Thyroid gland (tissue), 4 donors: ENCODE measurements at regions of chr1 and their contacts with region 1.

Region 1: GRCh38 chr1:23216771-23217420 is 406 bp downstream of the HTR1D start:
- DNase-seq: peak; percentile 12 to 17
- H3K4me3 ChIP-seq: peak overlapping the region in 1 of 3 donors; percentile 39
- H3K27ac ChIP-seq: no peak overlapping the region
- H3K4me1 ChIP-seq: peaks cover 5 to 13% of the 10 kb centered on the region in 2 donors
- H3K27me3 ChIP-seq: no peaks in the 10 kb centered on the region
- CTCF ChIP-seq: peak in 4 of 6 experiments; percentile 35 to 69 (median 52)
- POLR2A ChIP-seq: no peak

Region 2: DNA sequence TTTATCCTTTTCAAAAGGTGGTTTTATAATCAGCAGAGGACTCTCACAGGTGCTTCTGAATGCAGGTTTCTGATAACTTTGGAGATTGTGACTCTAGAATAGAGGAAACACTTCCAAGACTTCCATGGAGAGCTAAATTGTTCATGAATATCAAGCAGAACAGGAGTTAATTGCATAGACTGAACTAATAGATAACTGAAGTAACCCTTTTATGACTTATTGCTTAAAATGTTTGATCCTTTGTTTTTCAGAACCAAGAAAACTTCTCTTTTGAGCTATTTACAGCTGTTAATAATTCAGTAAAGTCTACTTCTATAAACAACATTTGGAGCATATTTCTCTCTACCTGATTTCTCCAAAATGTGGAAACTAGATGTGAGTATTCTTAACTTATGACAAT is 221.1 kb before region 1 on chr1:
- intact Hi-C with region 1: no loop called
- DNase-seq: no peak
- H3K4me3 ChIP-seq: no peak overlapping the region
- H3K27ac ChIP-seq: no peak overlapping the region
- H3K4me1 ChIP-seq: no peaks in the 10 kb centered on the region
- H3K27me3 ChIP-seq: no peaks in the 10 kb centered on the region
- CTCF ChIP-seq: no peak
- POLR2A ChIP-seq: no peak

Region 3: GRCh38 chr1:23278717-23279116 is 61.8 kb after region 1 on chr1:
- intact Hi-C with region 1: loop called (anchors 5 kb)
- DNase-seq: no peak
- H3K4me3 ChIP-seq: no peak overlapping the region
- H3K27ac ChIP-seq: no peak overlapping the region
- H3K4me1 ChIP-seq: peaks cover 0 to under 1% of the 10 kb centered on the region in 2 donors
- H3K27me3 ChIP-seq: no peaks in the 10 kb centered on the region
- CTCF ChIP-seq: no peak
- POLR2A ChIP-seq: no peak